Heart left ventricle (tissue), 16 donors: ENCODE measurements at regions of chr18 and their contacts with region 1.

Region 1: GRCh38 chr18:54357660-54358494 is at the starts of genes C18orf54 and STARD6:
- DNase-seq: peak; percentile 84 to 94 (median 88)
- ATAC-seq: peak; percentile 95 to 99 (median 99)
- H3K4me3 ChIP-seq: peak within 1 kb of the TSS; percentile 43 to 88 (median 76)
- H3K27ac ChIP-seq: peak within 1 kb of the TSS in 11 of 12 donors; percentile 13 to 73 (median 56)
- H3K4me1 ChIP-seq: peaks cover 0 to 15% (median 7%) of the 10 kb centered on the region in 12 donors
- H3K27me3 ChIP-seq: no peaks in the 10 kb centered on the region
- CTCF ChIP-seq: peak in 11 of 12 donors; percentile 11 to 62 (median 41)
- POLR2A ChIP-seq: peak in 1 of 2 donors; percentile 48
- total RNA-seq, gene C18orf54: 0.46 to 2.4 (median 1.1) TPM
- total RNA-seq, gene STARD6: not detected

Region 2: DNA sequence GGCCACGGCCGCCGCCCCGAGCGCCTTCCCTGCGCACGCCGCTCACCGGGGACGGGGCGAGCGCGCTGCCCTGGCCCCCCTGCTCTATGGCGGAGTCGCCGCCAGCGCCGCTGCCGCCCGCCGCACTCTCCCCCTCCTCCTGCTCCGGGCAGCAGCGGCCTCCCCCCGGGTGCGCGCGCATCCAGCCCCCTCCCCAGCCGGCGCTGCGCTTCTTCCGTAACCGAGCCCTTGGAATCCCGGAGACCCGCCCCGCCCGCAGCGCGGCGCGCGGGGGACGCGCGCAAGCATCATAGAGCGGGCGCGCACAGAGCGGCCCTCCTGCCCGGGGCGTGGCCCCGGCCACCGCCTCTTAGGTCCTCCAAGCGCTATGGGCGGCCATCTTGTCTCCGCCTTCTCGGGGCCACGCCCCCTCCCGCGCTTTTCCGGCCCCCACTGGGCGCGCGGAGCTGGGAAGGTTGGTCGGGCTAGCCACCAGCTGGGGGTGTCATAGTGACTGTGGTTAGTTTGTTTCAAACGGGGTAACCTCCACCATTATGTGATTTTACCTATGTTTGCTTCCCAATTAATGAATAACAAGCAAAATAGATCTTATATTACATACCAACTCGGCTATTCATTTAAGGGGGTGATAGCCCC is 133.4 kb before region 1 on chr18 and contains the start of gene MBD2:
- intact Hi-C with region 1: loop called in 5 of 10 experiments (anchors 10 kb)
- DNase-seq: peak; percentile 94 to 97 (median 96)
- ATAC-seq: peak; percentile 100
- H3K4me3 ChIP-seq: peak within 1 kb of the TSS; percentile 50 to 92 (median 77)
- H3K27ac ChIP-seq: peak within 1 kb of the TSS in 11 of 12 donors; percentile 59 to 86 (median 73)
- H3K4me1 ChIP-seq: peaks cover 0 to 45% (median 27%) of the 10 kb centered on the region in 12 donors
- H3K27me3 ChIP-seq: no peaks in the 10 kb centered on the region
- CTCF ChIP-seq: peak in 10 of 12 donors; percentile 9 to 64 (median 31)
- POLR2A ChIP-seq: peak in 1 of 2 donors; percentile 74
- total RNA-seq, gene MBD2: 15.9 to 74.9 (median 48.2) TPM

Region 3: GRCh38 chr18:54296062-54296461 is 61.8 kb before region 1 on chr18:
- intact Hi-C with region 1: no loop called
- DNase-seq: no peak
- ATAC-seq: no peak
- H3K4me3 ChIP-seq: no peak overlapping the region
- H3K27ac ChIP-seq: no peak overlapping the region
- H3K4me1 ChIP-seq: no peaks in the 10 kb centered on the region
- H3K27me3 ChIP-seq: no peaks in the 10 kb centered on the region
- CTCF ChIP-seq: no peak
- POLR2A ChIP-seq: no peak

Region 4: GRCh38 chr18:54453996-54454395 is 96.1 kb after region 1 on chr18:
- intact Hi-C with region 1: no loop called
- DNase-seq: no peak
- ATAC-seq: no peak
- H3K4me3 ChIP-seq: no peak overlapping the region
- H3K27ac ChIP-seq: no peak overlapping the region
- H3K4me1 ChIP-seq: no peaks in the 10 kb centered on the region
- H3K27me3 ChIP-seq: peaks cover 0 to 6% (median 0%) of the 10 kb centered on the region in 9 donors
- CTCF ChIP-seq: no peak
- POLR2A ChIP-seq: no peak